Prostate gland (tissue), 2 donors: ENCODE measurements at regions of chr11 and their contacts with region 1.

Region 1: DNA sequence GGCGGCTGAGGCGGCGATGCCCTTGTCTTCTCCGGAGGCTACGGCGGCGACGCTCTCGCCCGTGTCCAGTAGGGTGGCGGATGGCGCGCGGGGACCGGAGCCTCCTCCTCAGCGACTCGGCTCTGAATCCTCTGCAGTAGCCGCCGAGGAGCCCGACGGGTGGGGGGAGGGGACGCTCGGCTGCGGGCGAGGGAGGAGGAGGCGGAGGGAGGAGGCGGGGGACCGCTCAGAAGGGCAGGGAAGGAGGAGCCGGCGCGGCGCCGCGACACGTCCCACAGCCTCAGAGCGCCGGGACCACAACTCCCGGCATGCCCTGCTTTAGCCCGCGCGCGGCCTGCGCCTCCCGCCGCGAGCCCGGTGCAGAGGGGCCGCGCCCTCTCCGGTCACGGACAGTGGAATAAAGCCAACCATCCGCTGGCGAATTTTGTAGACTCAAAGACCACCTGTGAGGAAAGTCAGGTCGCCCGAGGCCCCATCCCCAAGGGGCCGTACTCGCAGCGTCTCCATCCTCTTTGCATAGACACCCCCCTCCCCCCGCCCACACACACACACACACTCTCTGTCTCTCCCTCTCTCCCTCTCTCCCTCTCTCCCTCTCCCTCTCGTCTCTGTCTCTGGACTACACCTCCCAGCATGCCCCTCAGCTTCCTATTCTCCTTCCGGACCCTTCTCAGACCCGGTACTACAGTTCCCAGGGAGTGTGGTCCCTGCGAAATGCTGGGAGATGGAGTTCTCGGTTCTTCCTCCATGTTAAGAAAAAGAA is at the start of gene FAM168A:
- DNase-seq: peak; percentile 96
- H3K4me3 ChIP-seq: peak within 1 kb of the TSS; percentile 88 to 96
- H3K27ac ChIP-seq: peak within 1 kb of the TSS; percentile 86
- H3K4me1 ChIP-seq: peaks cover 7% of the 10 kb centered on the region
- H3K27me3 ChIP-seq: no peaks in the 10 kb centered on the region
- CTCF ChIP-seq: peak in 2 of 4 experiments; percentile 45 to 54
- POLR2A ChIP-seq: peak; percentile 79
- total RNA-seq, gene FAM168A: 27.3 to 38.3 TPM

Region 2: GRCh38 chr11:73469401-73469800 is 128.7 kb before region 1 on chr11:
- intact Hi-C with region 1: loop called (anchors 5 kb)
- DNase-seq: no peak
- H3K4me3 ChIP-seq: no peak overlapping the region
- H3K27ac ChIP-seq: peak overlapping the region; percentile 21 to 33
- H3K4me1 ChIP-seq: no peaks in the 10 kb centered on the region
- H3K27me3 ChIP-seq: no peaks in the 10 kb centered on the region
- CTCF ChIP-seq: no peak
- POLR2A ChIP-seq: no peak

Region 3: GRCh38 chr11:73787643-73788537 is 189.8 kb after region 1 on chr11 and contains the start of gene MRPL48:
- intact Hi-C with region 1: no loop called
- DNase-seq: peak; percentile 83
- H3K4me3 ChIP-seq: peak within 1 kb of the TSS; percentile 61 to 68
- H3K27ac ChIP-seq: peak within 1 kb of the TSS; percentile 82 to 83
- H3K4me1 ChIP-seq: no peaks in the 10 kb centered on the region
- H3K27me3 ChIP-seq: no peaks in the 10 kb centered on the region
- CTCF ChIP-seq: peak in 1 of 4 experiments; percentile 20
- POLR2A ChIP-seq: peak; percentile 27
- total RNA-seq, gene MRPL48: 11.1 to 33.0 TPM